ENCODE measurements at regions of chr5 and their contacts with region 1.

Region 1: DNA sequence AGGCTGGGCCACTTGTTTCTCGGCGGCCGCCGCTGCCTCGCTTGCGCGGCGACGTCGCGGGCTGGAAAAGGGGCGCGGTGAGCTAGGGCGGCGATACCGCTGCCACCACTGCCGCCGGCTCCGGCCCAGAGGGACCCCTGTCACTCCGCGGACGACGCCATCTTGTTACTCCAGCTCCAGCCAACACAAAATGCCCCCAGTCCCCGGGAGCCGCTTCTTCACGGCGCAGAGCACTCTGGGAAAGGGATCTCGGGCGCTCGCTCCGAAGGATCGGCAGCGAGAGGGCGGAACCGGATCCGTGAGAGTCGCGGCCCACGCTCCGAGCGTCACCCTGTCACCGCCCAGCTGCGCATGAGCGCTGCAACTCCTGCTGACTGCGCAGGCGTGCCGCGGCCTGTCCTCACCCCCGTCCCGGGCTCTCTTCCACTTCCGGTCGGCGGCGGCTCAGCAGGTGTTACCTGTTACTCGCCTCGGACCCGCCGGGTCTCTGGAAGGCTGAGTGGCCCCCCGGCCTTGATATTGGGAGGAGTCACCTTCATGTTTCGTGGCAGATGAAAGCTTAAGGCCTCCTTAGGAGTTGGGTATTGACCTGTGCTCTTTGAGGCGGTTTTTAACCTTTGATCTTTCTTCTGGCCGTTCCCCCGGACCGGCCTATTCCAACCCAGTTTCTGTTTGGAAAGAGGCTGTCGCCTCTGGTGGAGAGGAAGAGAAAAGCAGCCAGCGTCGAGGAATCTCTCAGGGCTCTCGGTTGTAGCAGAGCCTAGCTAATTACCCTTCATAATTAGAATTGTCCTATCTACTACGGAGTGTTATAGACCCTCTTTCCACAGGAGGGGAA is at the start of gene CSNK1A1:
- H3K4me3 ChIP-seq: peak within 1 kb of the TSS; percentile 94
- H3K27ac ChIP-seq: peak within 1 kb of the TSS; percentile 97
- H3K4me1 ChIP-seq: peaks cover 11% of the 10 kb centered on the region
- CTCF ChIP-seq: peak; percentile 55; the same call in 1 of the 2 replicates

Region 2: DNA sequence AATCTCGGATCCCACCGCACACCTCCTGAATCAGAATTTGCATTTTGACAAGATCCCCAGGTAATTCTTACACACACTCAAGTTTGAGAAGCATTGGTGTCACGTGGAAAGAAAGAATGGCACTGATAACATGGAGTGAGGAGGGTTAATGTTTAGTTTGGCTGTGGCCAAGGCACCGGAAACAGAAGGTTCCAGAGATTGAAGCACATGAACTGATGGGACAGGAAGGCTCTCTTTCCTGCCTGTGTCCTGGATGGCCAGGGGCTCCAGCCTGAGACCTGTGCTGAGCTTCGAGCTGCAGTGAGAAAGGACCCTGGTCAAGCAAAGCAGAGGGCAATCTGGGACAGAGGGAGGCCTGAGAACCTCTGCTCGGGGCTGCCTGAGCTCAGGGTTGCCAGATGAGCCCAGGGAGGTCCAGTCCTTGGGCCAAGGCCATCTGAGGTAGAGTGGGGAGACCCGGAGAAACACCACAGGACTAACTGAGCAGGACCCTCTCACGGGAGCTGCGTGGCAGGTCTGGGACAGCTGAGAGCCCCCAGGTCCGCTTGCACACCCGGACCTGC is 252.5 kb before region 1 on chr5:
- CTCF ChIA-PET with region 1: no interaction called
- POLR2A ChIA-PET with region 1: no interaction called
- H3K4me3 ChIP-seq: no peak overlapping the region
- H3K27ac ChIP-seq: no peak overlapping the region
- H3K4me1 ChIP-seq: no peaks in the 10 kb centered on the region
- CTCF ChIP-seq: no peak

Region 3: GRCh38 chr5:149442563-149443182 is 108.7 kb before region 1 on chr5:
- CTCF ChIA-PET with region 1: interaction called, 13 read pairs
- POLR2A ChIA-PET with region 1: interaction called, 33 read pairs
- H3K4me3 ChIP-seq: no peak overlapping the region
- H3K27ac ChIP-seq: no peak overlapping the region
- H3K4me1 ChIP-seq: no peaks in the 10 kb centered on the region
- CTCF ChIP-seq: peak; percentile 88